OCI-LY7 (cell line): ENCODE measurements at regions of chr12 and their contacts with region 1.

Region 1: DNA sequence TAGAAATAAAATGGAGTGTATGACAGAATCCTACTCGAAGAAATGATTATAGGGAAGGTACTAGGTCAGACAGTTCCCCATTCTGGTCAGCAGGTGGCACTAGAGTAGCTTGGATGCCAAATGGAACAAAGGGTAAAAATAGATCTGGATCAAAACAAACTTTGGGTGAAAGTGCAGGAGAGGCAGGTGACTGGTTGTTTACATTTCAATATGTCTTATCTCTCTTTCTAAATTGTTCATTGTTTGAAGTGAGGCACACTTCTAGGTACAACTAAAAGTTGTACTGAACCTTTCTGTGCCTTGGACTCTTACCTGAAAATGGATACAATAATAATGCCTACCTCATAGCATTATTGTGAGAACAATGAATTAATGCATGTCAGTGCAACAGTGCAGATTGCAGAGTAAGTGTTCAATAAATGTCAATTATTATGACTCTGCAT is 62.0 kb upstream of the OSBPL8 start:
- DNase-seq: peak; percentile 63
- H3K4me3 ChIP-seq: no peak overlapping the region
- H3K27ac ChIP-seq: no peak overlapping the region
- H3K4me1 ChIP-seq: no peaks in the 10 kb centered on the region
- CTCF ChIP-seq: peak; percentile 99

Region 2: GRCh38 chr12:76548222-76548837 is 73.3 kb before region 1 on chr12:
- CTCF ChIA-PET with region 1: no interaction called
- POLR2A ChIA-PET with region 1: no interaction called
- intact Hi-C with region 1: no loop called
- DNase-seq: no peak
- H3K4me3 ChIP-seq: no peak overlapping the region
- H3K27ac ChIP-seq: no peak overlapping the region
- H3K4me1 ChIP-seq: peaks cover 29% of the 10 kb centered on the region
- CTCF ChIP-seq: no peak

Region 3: GRCh38 chr12:76790564-76791552 is 169.3 kb after region 1 on chr12:
- CTCF ChIA-PET with region 1: no interaction called
- POLR2A ChIA-PET with region 1: interaction called, 3 read pairs
- intact Hi-C with region 1: loop called (anchors 1 kb)
- DNase-seq: peak; percentile 58
- H3K4me3 ChIP-seq: no peak overlapping the region
- H3K27ac ChIP-seq: no peak overlapping the region
- H3K4me1 ChIP-seq: no peaks in the 10 kb centered on the region
- CTCF ChIP-seq: peak; percentile 88

Region 4: GRCh38 chr12:76927170-76927784 is 305.7 kb after region 1 on chr12:
- CTCF ChIA-PET with region 1: no interaction called
- POLR2A ChIA-PET with region 1: no interaction called
- intact Hi-C with region 1: loop called (anchors 5 kb)
- DNase-seq: peak; percentile 43
- H3K4me3 ChIP-seq: no peak overlapping the region
- H3K27ac ChIP-seq: no peak overlapping the region
- H3K4me1 ChIP-seq: no peaks in the 10 kb centered on the region
- CTCF ChIP-seq: peak; percentile 82

Region 5: DNA sequence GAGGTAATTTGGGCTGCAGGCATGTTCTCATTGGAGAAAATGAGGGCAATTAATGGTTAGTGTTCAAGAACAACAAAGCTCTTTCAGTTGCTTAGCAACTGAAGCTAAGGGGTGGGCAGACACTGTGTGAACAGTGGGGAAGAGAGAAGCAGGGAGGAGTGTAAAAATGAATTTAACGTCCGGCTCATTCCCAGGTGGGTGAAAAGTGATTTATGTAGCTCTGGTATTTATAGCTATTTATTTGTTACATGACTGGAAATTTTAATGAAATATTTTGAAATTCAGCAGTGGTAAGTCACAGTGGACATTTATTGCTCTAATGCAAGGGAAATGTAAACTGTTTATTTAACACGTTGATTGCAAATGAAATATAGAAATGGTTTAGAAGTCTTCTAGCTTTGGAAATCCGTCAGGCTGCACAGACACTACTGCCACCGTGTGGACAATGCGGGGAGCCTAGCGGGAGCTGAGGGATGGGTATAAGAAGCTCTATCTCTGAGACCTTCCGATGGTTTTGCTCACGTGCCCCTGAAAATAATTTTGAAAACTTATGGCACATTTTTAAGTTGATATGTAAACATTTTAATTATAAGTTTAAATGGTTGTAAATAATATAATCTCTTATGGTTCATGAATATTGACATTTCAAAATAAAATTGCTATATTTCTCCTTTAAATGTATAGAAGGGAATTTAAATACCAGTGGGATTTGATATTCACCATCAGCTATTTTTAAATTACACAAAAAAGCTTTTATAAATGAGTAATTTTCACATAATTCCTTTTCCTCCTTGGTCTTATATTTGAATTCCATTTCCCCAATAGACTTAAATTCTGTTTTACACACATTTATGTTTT is 389.3 kb after region 1 on chr12:
- CTCF ChIA-PET with region 1: interaction called, 4 read pairs
- POLR2A ChIA-PET with region 1: no interaction called
- intact Hi-C with region 1: loop called (anchors 1 kb)
- DNase-seq: peak; percentile 63
- H3K4me3 ChIP-seq: no peak overlapping the region
- H3K27ac ChIP-seq: no peak overlapping the region
- H3K4me1 ChIP-seq: no peaks in the 10 kb centered on the region
- CTCF ChIP-seq: peak; percentile 98